Activated naive CD4-positive, alpha-beta T cell treated with anti-CD3 and anti-CD28 coated beads for 36 hours (primary cell): ENCODE measurements at regions of chr15 and their contacts with region 1.

Region 1: GRCh38 chr15:74808073-74808755 is 4.4 kb upstream of the LMAN1L start:
- DNase-seq: no peak
- H3K4me3 Mint-ChIP-seq: no peak overlapping the region
- H3K27ac Mint-ChIP-seq: peak overlapping the region; percentile 2
- H3K4me1 Mint-ChIP-seq: peaks cover 27% of the 10 kb centered on the region
- H3K27me3 Mint-ChIP-seq: no peaks in the 10 kb centered on the region

Region 2: GRCh38 chr15:74793135-74794028 is 14.8 kb before region 1 on chr15:
- CTCF ChIA-PET with region 1: interaction called, 1,193 read pairs
- intact Hi-C with region 1: no loop called
- DNase-seq: peak; percentile 88
- H3K4me3 Mint-ChIP-seq: no peak overlapping the region
- H3K27ac Mint-ChIP-seq: peak overlapping the region; percentile 99
- H3K4me1 Mint-ChIP-seq: peaks cover 90% of the 10 kb centered on the region
- H3K27me3 Mint-ChIP-seq: no peaks in the 10 kb centered on the region